Left ventricle myocardium superior (tissue), 1 donor: ENCODE measurements at regions of chr2 and their contacts with region 1.

Region 1: GRCh38 chr2:16257322-16258028 is 317.1 kb downstream of the MYCN start:
- DNase-seq: no peak
- ATAC-seq: no peak

Region 2: GRCh38 chr2:15818205-15818809 is 439.2 kb before region 1 on chr2:
- intact Hi-C with region 1: no loop called
- DNase-seq: no peak
- ATAC-seq: no peak

Region 3: GRCh38 chr2:16179701-16180416 is 77.6 kb before region 1 on chr2:
- intact Hi-C with region 1: loop called (anchors 10 kb)
- DNase-seq: no peak
- ATAC-seq: no peak

Region 4: DNA sequence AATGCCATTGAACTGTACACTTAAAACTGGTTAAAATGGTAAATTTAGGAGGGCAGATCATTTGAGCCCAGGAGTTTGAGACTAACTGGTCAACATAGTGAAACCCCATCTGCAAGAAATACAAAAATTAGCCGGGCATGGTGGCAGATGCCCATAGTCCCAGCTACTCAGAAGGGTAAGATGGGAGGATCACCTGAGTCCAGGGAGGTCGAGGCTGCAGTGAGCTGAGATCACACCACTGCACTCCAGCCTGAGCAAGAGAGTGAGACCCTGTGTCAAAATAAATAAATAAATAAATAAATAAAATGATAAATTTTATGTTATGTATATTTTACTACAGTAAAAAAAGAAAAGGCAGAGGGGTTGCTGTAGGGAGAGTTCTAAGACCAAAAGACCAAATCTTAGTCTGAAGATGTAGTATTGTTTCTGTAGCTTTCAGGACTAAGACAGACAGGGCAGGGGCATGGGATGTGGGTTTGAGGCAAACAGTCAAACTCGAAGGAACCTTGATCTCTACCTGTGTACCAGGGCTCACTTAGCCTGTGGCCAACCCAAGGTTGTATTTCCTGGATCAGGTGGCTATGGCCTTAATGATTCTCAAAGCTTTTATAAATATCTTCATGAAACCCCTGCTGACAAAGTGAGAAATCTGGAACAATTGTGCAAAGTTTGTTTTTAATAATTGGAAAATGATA is 91.5 kb after region 1 on chr2:
- intact Hi-C with region 1: no loop called
- DNase-seq: no peak
- ATAC-seq: no peak

Region 5: DNA sequence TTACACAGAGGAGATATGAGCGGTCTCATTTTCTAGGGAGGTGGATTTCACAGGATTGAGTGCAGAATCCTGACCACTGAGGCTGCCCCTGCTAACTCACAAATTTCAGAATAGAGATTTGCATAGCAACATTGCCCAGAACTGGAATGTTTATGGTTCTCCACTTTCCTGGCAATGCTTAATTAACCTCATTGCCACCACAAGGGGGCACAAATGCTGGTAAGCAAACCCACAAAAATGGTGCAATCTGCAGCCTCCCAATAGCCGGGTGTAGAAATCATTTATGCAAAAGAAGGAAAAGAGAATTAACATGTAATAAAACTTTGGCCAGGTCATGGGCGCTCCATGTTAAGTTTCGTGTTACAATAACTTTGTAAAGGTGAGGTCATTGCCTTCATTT is 295.8 kb after region 1 on chr2:
- intact Hi-C with region 1: no loop called
- DNase-seq: no peak
- ATAC-seq: peak; percentile 47